Activated B cell treated with CpG ODN at 0.5 μM for 24 hours (primary cell): ENCODE measurements at regions of chr19 and their contacts with region 1.

Region 1: DNA sequence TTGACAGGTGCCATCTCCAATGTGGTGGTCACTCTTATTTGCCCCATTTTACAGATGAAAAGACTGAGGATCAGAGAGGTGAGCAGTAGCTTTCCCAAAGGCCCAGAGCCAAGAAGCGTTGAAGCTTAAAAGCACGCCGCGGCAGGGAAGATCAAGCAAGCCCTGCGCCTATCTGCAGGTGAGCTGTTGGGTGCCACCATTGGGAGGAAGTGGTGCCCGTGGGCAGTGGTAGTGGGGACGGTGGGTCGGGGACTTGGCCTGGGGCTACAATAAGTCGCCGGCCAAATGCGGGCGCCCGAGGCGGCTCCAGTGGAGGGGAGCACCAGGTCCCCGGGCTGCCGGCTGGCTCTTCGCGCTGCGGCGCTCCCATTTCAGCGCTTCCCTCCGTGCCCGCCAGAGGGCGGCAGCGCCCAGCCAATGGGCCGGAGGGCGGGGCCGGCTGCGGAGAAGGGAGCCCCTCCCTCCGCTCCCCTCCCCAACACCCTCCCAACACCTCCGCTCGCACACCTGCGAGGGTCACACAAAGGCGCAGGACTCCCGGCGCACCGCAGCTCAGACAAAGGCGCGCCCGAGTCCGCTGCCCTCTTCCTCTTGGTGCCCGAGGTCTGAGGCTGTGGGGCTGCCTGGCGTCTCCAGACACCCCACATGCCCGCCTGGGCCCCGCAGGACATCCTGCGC is 744 bp upstream of the POU2F2 start:
- DNase-seq: peak; percentile 97
- ATAC-seq: peak; percentile 27
- H3K4me3 Mint-ChIP-seq: peak overlapping the region; percentile 95
- H3K27ac Mint-ChIP-seq: peak overlapping the region; percentile 90
- H3K4me1 Mint-ChIP-seq: peaks cover 60% of the 10 kb centered on the region
- H3K27me3 Mint-ChIP-seq: no peaks in the 10 kb centered on the region
- CTCF ChIP-seq: no peak

Region 2: GRCh38 chr19:41327576-41328156 is 805.3 kb before region 1 on chr19:
- CTCF ChIA-PET with region 1: no interaction called
- POLR2A ChIA-PET with region 1: no interaction called
- intact Hi-C with region 1: no loop called
- DNase-seq: peak; percentile 77
- ATAC-seq: peak; percentile 71
- H3K4me3 Mint-ChIP-seq: peak overlapping the region; percentile 77
- H3K27ac Mint-ChIP-seq: peak overlapping the region; percentile 91
- H3K4me1 Mint-ChIP-seq: peaks cover 70% of the 10 kb centered on the region
- H3K27me3 Mint-ChIP-seq: no peaks in the 10 kb centered on the region
- CTCF ChIP-seq: no peak

Region 3: DNA sequence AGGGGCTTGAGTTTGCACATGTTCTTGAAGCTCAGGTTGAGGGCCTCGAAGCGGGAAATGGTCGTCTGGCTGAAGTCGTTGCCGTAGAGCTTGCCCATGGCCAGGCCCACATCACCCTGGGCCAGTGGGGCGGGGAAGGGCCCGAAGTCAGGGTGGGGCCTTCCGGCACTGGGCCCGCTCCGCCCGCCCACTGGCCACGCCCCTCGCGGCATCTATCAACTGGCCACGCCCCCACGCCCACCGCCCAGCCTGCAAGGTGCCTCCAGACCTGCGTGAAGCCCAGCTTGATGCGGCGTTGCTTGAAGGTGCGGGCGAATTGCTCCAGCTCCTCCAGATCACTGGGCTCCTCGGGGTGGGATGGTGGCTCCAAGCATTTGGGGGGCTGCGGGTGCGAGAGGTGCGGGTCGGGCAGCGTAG is 37.2 kb before region 1 on chr19:
- CTCF ChIA-PET with region 1: no interaction called
- POLR2A ChIA-PET with region 1: interaction called, 1,230 read pairs
- intact Hi-C with region 1: loop called (anchors 5 kb)
- DNase-seq: no peak
- ATAC-seq: peak; percentile 21
- H3K4me3 Mint-ChIP-seq: no peak overlapping the region
- H3K27ac Mint-ChIP-seq: no peak overlapping the region
- H3K4me1 Mint-ChIP-seq: peaks cover 15% of the 10 kb centered on the region
- H3K27me3 Mint-ChIP-seq: no peaks in the 10 kb centered on the region
- CTCF ChIP-seq: no peak

Region 4: GRCh38 chr19:42121656-42122069 is 11.3 kb before region 1 on chr19:
- CTCF ChIA-PET with region 1: interaction called, 426 read pairs
- POLR2A ChIA-PET with region 1: interaction called, 1,230 read pairs
- intact Hi-C with region 1: loop called (anchors 1 kb)
- DNase-seq: peak; percentile 85
- ATAC-seq: peak; percentile 81
- H3K4me3 Mint-ChIP-seq: peak overlapping the region; percentile 80
- H3K27ac Mint-ChIP-seq: peak overlapping the region; percentile 96
- H3K4me1 Mint-ChIP-seq: peaks cover 97% of the 10 kb centered on the region
- H3K27me3 Mint-ChIP-seq: no peaks in the 10 kb centered on the region
- CTCF ChIP-seq: no peak

Region 5: DNA sequence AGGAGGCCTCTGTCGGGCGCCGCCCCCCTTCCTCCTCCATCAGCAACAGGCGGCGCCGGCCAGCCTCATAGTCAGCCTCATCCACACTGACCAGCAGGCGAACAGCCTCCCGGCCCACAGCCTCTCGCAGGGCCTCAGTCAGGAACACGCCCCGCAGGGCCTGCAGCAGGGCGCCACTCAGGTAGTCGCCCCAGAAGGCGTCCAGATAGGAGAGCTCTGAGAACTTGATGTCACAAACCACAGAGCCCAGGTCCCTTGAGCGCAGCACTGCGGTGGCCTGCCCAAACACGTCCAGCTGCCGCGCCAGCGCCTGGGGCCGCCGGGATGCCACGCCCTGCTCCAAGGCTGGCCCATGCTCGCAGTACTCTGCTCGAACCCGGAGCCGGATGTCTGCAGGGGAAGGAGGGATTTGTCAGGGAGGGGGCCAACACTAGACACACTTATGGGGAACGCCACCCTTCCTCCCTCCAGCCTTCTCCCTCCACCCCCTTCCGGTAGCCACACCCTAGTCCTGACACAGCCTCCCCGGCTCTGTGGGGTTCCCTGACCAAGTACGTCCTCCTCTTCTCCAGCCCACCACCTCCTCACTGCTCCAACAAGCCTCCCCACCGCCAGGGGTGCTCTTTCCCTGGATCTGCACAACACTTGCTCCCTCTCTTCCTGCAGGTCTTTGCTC is 66.6 kb after region 1 on chr19:
- CTCF ChIA-PET with region 1: interaction called, 3 read pairs
- POLR2A ChIA-PET with region 1: interaction called, 10 read pairs
- intact Hi-C with region 1: no loop called
- DNase-seq: peak; percentile 47
- ATAC-seq: peak; percentile 44
- H3K4me3 Mint-ChIP-seq: peak overlapping the region; percentile 68
- H3K27ac Mint-ChIP-seq: peak overlapping the region; percentile 93
- H3K4me1 Mint-ChIP-seq: peaks cover 87% of the 10 kb centered on the region
- H3K27me3 Mint-ChIP-seq: no peaks in the 10 kb centered on the region
- CTCF ChIP-seq: no peak

Region 6: DNA sequence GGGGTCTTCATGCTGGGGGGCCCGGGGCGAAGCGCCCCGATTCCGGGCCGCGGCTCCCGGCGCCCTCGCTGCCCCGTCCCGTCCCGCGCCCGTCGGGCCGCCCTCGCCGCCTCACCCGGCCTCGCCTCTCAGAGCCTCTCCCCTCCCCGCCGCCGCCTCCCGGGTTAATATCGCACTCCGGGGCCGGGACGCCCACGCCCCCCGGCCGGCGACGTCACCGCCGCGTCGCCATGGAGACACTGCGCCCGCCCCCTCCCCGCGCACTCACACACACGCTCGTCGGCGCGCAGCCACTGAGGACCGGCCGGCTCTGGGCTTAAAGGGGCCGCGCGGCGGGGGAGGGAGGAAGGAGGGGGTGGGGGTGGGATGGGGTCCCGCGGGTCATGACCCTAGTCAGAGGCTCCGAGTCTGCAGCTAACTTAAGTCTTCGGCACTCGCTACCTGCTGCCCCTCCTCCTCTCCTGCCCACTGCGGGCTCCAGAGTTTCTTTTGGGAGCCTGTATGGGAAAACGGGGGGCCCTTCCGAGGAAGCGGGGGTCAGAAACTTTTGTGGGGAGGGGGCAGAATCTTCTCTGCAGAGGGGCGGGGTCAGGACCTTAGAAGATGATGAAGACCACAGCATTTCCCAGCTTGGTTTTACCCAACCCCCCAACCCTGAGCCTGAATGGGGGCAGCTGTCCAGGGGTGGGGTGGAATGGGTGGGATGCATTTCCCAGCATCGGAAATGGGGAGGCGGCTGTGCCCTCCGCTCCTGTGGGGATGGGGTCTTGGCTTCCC is 122.2 kb after region 1 on chr19 and contains the start of gene ERF:
- CTCF ChIA-PET with region 1: no interaction called
- POLR2A ChIA-PET with region 1: interaction called, 4 read pairs
- intact Hi-C with region 1: loop called (anchors 1 kb)
- DNase-seq: peak; percentile 97
- ATAC-seq: peak; percentile 76
- H3K4me3 Mint-ChIP-seq: peak within 1 kb of the TSS; percentile 84
- H3K27ac Mint-ChIP-seq: peak within 1 kb of the TSS; percentile 73
- H3K4me1 Mint-ChIP-seq: peaks cover 28% of the 10 kb centered on the region
- H3K27me3 Mint-ChIP-seq: peaks cover 5% of the 10 kb centered on the region
- CTCF ChIP-seq: no peak
- total RNA-seq, gene ERF: 47.9 and 48.1 TPM in 2 replicates

Region 7: DNA sequence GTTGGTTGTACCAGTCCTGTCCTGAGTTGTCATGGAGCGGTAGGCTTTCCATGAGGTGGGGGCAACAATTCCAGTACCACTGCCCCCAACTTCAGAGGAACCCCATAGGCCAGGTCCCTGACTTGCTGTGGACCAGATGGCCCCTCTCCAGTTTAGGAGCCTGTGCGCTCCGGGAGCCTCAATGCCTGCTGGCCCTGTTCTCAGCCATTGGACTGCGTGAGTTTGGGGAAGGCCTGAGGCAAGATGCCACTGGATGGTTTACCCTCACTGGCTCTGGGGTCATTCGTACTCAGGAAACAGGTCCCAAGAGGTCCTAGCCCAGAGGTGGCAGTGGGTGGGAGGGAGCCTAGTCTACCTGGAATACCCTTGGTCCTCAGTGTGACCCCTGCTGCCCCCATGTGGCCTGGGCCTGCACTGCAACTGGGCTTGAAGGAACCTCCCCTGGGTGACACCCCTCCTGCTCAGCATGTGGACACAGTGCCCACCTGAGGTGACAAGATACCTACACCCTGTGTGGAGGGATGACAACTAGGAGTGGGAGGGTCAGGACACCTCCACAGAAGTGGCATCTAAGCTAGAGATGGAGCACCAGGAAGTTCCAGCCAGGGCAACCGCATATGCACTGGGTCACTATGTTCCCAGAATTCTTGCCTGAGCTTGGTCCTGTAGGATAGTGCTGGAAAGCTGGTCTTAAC is 163.0 kb after region 1 on chr19:
- CTCF ChIA-PET with region 1: interaction called, 26 read pairs
- POLR2A ChIA-PET with region 1: interaction called, 4 read pairs
- intact Hi-C with region 1: loop called (anchors 1 kb)
- DNase-seq: peak; percentile 92
- ATAC-seq: peak; percentile 98
- H3K4me3 Mint-ChIP-seq: no peak overlapping the region
- H3K27ac Mint-ChIP-seq: no peak overlapping the region
- H3K4me1 Mint-ChIP-seq: peaks cover 7% of the 10 kb centered on the region
- H3K27me3 Mint-ChIP-seq: no peaks in the 10 kb centered on the region
- CTCF ChIP-seq: peak; percentile 90

Region 8: GRCh38 chr19:42423462-42424344 is 290.7 kb after region 1 on chr19:
- CTCF ChIA-PET with region 1: no interaction called
- POLR2A ChIA-PET with region 1: interaction called, 5 read pairs
- intact Hi-C with region 1: loop called (anchors 2 kb)
- DNase-seq: peak; percentile 91
- ATAC-seq: peak; percentile 90
- H3K4me3 Mint-ChIP-seq: peak overlapping the region; percentile 98
- H3K27ac Mint-ChIP-seq: peak overlapping the region; percentile 98
- H3K4me1 Mint-ChIP-seq: peaks cover 46% of the 10 kb centered on the region
- H3K27me3 Mint-ChIP-seq: no peaks in the 10 kb centered on the region
- CTCF ChIP-seq: no peak